ENCODE measurements at regions of chr7 and their contacts with region 1.

Region 1: DNA sequence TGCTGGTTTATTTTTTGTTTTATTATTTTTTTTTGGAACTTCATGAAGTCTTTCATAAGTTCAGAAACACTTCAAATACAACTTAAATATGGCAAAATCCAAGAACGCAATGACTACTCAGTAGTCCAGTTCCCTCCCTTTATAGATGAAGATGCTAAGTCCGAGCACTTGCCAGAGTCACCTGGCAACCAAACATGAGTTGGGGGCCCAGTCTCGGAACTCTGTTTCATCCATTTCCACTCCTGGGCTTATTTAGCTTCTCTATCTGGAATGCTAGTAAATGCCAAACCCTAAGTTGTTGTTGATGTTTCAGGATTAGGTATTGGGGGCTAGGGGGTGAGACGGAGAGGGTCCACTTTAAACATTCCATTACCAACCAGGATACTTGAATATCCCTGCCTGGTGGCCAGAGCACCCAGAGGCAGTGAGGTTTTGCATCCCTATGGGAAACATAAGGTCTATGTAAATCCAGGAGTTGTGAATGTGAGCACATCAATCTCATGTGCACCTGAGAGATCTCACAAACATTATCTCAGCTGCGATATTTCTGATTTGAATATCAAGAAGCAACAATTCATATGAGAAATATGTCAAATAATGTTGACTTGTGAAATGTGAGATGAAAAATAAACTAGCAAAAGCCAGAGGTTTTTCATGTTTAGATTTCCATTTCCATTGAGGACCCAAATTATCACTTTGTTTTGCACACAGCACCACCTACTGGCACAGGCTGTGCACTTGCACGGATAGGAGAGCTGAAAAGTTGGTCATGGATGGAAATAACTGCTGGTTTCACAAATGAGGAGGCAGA is 129.3 kb downstream of the PKD1L1 start:
- DNase-seq: peak; percentile 75
- ATAC-seq: peak; percentile 78

Region 2: DNA sequence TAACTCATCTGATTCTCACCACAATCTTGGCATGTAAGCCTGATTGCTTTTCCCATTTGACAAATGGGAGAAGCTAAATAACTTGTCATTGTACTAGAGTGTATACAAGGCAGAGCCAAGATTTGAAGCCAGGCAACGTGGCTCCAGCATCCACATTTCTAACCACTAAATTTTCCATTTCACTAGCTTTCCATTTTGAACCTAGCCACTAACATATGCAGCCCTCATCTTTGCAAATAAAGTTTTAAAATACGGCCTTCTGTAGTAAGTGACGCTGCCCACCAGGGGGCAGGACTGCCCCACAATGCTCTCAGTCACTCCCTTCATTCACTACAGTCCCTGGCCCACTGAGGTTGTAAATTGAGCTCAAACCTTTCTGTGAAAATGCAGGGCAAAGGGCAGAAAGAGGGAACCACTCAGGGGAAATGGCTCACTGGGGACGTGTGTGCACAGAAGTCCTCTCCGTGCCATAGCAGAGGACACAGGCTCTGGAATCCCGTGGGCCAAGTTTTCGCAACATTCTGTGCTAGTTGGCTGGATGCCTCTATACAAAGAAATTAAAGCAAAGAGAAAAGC is 552.8 kb before region 1 on chr7:
- intact Hi-C with region 1: loop called (anchors 1 kb)
- DNase-seq: peak; percentile 65
- ATAC-seq: peak; percentile 88

Region 3: GRCh38 chr7:47432671-47433563 is 386.1 kb before region 1 on chr7:
- intact Hi-C with region 1: loop called (anchors 5 kb)
- DNase-seq: no peak
- ATAC-seq: peak; percentile 57

Region 4: GRCh38 chr7:48182718-48183369 is 363.8 kb after region 1 on chr7:
- intact Hi-C with region 1: no loop called
- DNase-seq: no peak
- ATAC-seq: no peak